Activated T-helper 2 cell treated with anti-CD3 and anti-CD28 coated beads, Interferon-gamma antibody, Interleukin-2, Interleukin-4, amounts not matched to agents 10 μg/mL and 5 μg/mL and 100 μg/mL, durations not matched to agents 14 hours and 24 hours and 36 hours (primary cell): ENCODE measurements at regions of chr4 and their contacts with region 1.

Region 1: GRCh38 chr4:142817442-142817841 is 28.7 kb downstream of the INPP4B start:
- DNase-seq: peak; percentile 26
- H3K4me3 Mint-ChIP-seq: no peak overlapping the region
- H3K27ac Mint-ChIP-seq: peak overlapping the region; percentile 78
- H3K4me1 Mint-ChIP-seq: peaks cover 23% of the 10 kb centered on the region
- H3K27me3 Mint-ChIP-seq: no peaks in the 10 kb centered on the region

Region 2: GRCh38 chr4:142293536-142293935 is 523.9 kb before region 1 on chr4:
- intact Hi-C with region 1: loop called (anchors 10 kb)
- DNase-seq: no peak
- H3K4me3 Mint-ChIP-seq: no peak overlapping the region
- H3K27ac Mint-ChIP-seq: no peak overlapping the region
- H3K4me1 Mint-ChIP-seq: peaks cover 32% of the 10 kb centered on the region
- H3K27me3 Mint-ChIP-seq: no peaks in the 10 kb centered on the region

Region 3: DNA sequence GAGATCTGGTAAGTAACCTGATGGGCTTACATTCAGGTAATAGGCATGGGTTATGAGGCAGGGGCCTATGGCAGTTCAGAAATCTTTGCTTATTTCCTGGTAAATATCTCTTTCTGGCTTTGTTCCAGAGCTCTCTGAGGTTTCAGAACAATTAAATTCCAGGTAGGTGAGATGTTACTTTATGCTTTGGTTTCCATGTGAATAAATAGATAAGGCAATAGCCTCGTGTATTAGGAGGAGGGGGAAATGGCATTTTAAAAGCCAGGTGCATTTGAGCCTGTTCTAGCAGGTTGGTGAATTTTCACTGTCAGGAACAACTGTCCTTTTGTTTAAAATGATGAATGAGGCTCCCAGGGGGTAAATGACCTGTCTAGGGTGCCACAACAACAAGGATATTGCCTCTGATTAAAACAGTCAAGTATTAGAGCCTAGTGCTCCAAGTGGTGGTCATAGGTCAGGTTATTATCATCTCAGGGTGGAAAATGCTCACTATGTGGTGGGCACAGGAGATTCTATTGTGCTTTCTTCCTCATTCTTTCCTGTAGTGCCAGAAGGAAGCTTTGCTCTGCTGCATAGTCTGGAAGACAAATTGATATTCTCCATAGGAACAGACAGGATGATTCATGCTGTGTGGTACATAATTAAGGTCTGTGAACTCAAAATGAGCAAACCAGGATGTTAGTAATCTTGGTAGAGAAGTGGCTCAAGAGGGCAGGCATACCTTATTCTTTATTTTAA is 267.5 kb before region 1 on chr4:
- intact Hi-C with region 1: loop called (anchors 5 kb)
- DNase-seq: no peak
- H3K4me3 Mint-ChIP-seq: no peak overlapping the region
- H3K27ac Mint-ChIP-seq: peak overlapping the region; percentile 68
- H3K4me1 Mint-ChIP-seq: peaks cover 59% of the 10 kb centered on the region
- H3K27me3 Mint-ChIP-seq: no peaks in the 10 kb centered on the region

Region 4: GRCh38 chr4:142713282-142714030 is 104.0 kb before region 1 on chr4:
- intact Hi-C with region 1: loop called (anchors 5 kb)
- DNase-seq: no peak
- H3K4me3 Mint-ChIP-seq: no peak overlapping the region
- H3K27ac Mint-ChIP-seq: peak overlapping the region; percentile 40
- H3K4me1 Mint-ChIP-seq: peaks cover 46% of the 10 kb centered on the region
- H3K27me3 Mint-ChIP-seq: no peaks in the 10 kb centered on the region

Region 5: DNA sequence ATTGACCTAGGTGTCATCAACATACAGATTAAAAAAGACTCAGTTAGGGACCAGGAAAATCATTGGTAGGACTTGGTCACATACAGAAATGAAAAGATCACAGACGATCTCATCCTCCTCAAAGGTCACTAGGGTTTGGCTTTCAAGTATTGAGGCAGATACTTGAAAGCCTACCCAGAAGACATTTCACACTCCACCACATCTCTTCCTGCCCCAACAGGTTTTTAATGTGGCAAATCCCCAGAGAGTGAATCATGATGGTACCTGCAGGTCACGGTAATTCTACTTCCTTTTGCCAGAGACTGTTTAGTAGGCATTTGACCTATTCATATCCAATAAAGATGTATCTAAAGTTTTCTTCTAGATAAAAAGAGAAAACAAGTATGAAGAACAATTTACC is 15.5 kb before region 1 on chr4:
- intact Hi-C with region 1: loop called (anchors 2 kb)
- DNase-seq: no peak
- H3K4me3 Mint-ChIP-seq: no peak overlapping the region
- H3K27ac Mint-ChIP-seq: peak overlapping the region; percentile 11
- H3K4me1 Mint-ChIP-seq: peaks cover 17% of the 10 kb centered on the region
- H3K27me3 Mint-ChIP-seq: no peaks in the 10 kb centered on the region